Right cardiac atrium (tissue), 5 donors: ENCODE measurements at regions of chr19 and their contacts with region 1.

Region 1: DNA sequence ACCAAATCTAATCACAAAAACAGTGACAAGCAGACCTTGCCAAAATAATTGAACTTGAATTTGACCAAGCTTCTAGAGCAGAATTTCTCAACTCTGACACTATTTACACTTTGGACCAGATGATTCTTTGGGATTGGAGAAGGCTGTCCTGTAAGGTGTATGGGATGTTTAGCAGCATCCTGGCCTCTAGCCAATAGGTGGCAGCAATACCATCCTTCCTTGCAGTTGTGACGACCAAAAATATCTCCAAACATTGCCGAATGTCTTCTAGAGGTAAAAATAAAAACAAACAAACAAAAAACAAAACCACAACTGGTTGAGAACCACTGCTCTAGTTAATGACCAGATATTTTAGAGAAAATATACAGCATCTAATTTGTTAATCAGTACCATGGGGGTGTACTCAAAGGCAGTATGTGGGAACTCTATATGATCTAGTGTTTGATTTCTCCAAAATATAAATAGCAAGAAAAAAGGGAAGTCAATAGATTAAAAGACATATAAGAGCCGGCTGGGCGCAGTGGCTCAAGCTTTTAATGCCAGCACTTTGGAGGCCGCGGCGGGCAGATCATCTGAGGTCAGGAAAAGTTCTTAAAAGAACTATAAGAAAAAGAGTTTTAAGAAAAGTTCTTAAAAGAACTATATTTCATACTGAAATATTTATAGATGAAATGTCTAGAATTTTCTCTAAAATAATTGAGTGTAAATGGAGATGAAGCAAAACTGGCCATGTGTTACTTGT is 60.9 kb upstream of the ZNF527 start:
- DNase-seq: no peak
- ATAC-seq: no peak
- H3K4me3 ChIP-seq: no peak overlapping the region
- H3K27ac ChIP-seq: no peak overlapping the region
- H3K4me1 ChIP-seq: peaks cover 4% of the 10 kb centered on the region
- H3K27me3 ChIP-seq: no peaks in the 10 kb centered on the region

Region 2: DNA sequence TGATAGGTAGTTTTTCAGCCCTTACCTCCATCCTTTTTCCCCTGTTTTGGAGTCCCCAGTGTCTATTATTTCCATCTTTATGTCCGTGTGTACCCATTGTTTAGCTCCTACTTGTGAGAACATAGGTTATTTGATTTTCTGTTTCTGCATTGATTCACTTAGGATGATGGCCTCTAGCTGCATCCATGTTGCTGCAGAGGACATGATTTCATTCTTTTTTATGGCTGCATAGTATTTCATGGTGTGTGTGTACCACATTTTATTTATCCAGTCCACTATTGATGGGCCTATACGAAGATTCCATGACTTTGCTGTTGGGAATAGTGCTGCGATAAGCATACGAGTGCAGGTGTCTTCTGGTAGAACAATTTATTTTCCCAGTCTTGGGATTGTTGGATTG is 45.9 kb after region 1 on chr19:
- intact Hi-C with region 1: no loop called
- DNase-seq: no peak
- ATAC-seq: no peak
- H3K4me3 ChIP-seq: no peak overlapping the region
- H3K27ac ChIP-seq: no peak overlapping the region
- H3K4me1 ChIP-seq: no peaks in the 10 kb centered on the region
- H3K27me3 ChIP-seq: no peaks in the 10 kb centered on the region

Region 3: DNA sequence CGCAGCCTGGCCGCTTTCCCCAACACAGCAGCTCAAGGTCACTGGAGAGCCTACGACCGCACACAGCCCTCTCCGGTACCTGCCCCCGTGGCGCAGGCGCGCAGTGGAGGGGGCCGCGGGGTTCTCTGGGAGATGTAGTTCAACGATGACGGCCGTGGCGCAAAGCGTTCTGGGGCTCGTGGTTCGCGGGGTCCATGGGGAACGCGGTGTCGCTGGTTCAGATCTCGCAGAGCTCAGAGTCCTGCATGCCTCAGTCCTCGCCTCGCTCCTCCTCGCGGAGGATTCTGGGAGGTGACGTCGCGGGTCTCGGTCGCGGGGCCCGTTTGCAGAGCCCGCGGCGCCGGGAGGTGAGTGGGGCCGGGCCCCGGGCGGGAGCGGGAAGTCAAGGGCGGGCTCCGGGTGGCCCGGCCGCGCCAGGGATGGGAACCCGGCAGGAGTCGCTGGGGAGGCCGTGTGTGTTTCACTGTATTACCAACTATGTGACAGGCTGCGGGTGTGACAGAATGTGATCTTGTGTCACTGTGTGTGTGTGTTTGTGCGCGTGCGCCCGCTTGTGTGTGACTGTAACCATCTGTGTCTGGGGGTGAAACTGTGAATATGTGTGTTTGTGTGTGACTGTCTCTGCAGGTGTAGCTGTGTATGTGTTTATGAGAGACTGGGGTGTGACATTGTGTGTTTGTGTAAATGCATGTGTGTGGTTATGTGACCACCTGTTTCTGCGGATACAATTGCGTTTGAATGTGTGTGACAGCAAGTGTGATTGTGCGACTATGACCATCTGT is 61.1 kb after region 1 on chr19 and contains the start of gene ZNF527:
- intact Hi-C with region 1: loop called in 1 of 4 experiments (anchors 10 kb)
- DNase-seq: peak; percentile 98 to 99 (median 99)
- ATAC-seq: peak; percentile 99
- H3K4me3 ChIP-seq: peak within 1 kb of the TSS; percentile 72
- H3K27ac ChIP-seq: peak within 1 kb of the TSS; percentile 77
- H3K4me1 ChIP-seq: no peaks in the 10 kb centered on the region
- H3K27me3 ChIP-seq: no peaks in the 10 kb centered on the region
- total RNA-seq, gene ZNF527: 5.4 to 7.9 (median 6.9) TPM